Ovary (tissue), 10 donors: ENCODE measurements at regions of chr15 and their contacts with region 1.

Region 1: GRCh38 chr15:44663409-44664308 is at the start of gene SPG11:
- DNase-seq: peak; percentile 96 to 98 (median 97)
- H3K4me3 ChIP-seq: peak within 1 kb of the TSS; percentile 69
- H3K27ac ChIP-seq: peak within 1 kb of the TSS; percentile 82 to 88
- H3K4me1 ChIP-seq: peaks cover 3% of the 10 kb centered on the region
- H3K27me3 ChIP-seq: no peaks in the 10 kb centered on the region
- CTCF ChIP-seq: peak; percentile 86 to 96 (median 92)
- EP300 ChIP-seq: no peak
- POLR2A ChIP-seq: peak; percentile 84
- total RNA-seq, gene SPG11: 40.3 to 79.8 (median 53.7) TPM

Region 2: GRCh38 chr15:44532689-44533088 is 131.0 kb before region 1 on chr15:
- intact Hi-C with region 1: no loop called
- DNase-seq: no peak
- H3K4me3 ChIP-seq: no peak overlapping the region
- H3K27ac ChIP-seq: no peak overlapping the region
- H3K4me1 ChIP-seq: peaks cover 5% of the 10 kb centered on the region
- H3K27me3 ChIP-seq: no peaks in the 10 kb centered on the region
- CTCF ChIP-seq: no peak
- EP300 ChIP-seq: no peak
- POLR2A ChIP-seq: no peak

Region 3: DNA sequence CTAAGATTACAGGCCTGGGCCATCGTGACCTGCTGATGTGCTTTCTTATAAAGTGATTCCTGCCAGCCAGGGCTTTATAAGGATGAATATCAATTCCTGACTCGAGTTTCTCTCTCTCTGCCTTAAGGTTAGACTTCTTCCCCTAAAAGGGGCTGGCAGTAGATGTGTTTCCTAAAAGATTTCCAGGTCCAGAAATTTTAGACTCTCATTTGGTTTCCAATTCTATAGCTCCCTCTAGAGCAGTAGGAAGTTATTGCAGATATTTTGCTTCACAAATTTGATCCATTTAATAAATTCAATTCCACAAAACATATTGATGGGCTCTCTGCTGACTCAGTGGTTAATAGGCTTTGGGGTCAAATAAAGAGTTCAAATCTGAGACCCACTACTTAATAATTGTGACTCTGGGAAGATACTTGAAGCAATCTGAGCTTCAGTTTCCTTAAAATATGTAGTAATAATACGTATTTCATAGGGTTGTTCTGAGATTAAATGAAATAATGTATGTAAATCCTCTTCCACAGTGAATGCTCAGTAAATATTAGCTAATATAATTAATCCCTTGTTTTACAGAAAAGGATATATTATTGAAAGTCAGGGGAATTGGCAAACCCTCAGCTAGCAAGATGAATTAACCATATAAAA is 74.8 kb after region 1 on chr15:
- intact Hi-C with region 1: loop called in 3 of 4 experiments (anchors 5 kb)
- DNase-seq: no peak
- H3K4me3 ChIP-seq: no peak overlapping the region
- H3K27ac ChIP-seq: no peak overlapping the region
- H3K4me1 ChIP-seq: peaks cover 2% of the 10 kb centered on the region
- H3K27me3 ChIP-seq: no peaks in the 10 kb centered on the region
- CTCF ChIP-seq: peak; percentile 63 to 78 (median 72)
- EP300 ChIP-seq: no peak
- POLR2A ChIP-seq: no peak

Region 4: GRCh38 chr15:44788748-44789147 is 125.1 kb after region 1 on chr15:
- intact Hi-C with region 1: loop called in 1 of 4 experiments (anchors 5 kb)
- DNase-seq: no peak
- H3K4me3 ChIP-seq: no peak overlapping the region
- H3K27ac ChIP-seq: no peak overlapping the region
- H3K4me1 ChIP-seq: no peaks in the 10 kb centered on the region
- H3K27me3 ChIP-seq: no peaks in the 10 kb centered on the region
- CTCF ChIP-seq: no peak
- EP300 ChIP-seq: no peak
- POLR2A ChIP-seq: no peak